H1 (cell line): ENCODE measurements at regions of chr10 and their contacts with region 1.

Region 1: GRCh38 chr10:47055386-47056246 is 144.4 kb downstream of the PTPN20 start:
- DNase-seq: no peak
- H3K4me3 ChIP-seq: no peak overlapping the region
- H3K27ac ChIP-seq: no peak overlapping the region; the same call in 1 of the 2 replicates
- H3K4me1 ChIP-seq: no peaks in the 10 kb centered on the region
- H3K27me3 ChIP-seq: no peaks in the 10 kb centered on the region
- CTCF ChIP-seq: no peak
- EP300 ChIP-seq: no peak
- POLR2A ChIP-seq: no peak
- RAD21 ChIP-seq: no peak

Region 2: DNA sequence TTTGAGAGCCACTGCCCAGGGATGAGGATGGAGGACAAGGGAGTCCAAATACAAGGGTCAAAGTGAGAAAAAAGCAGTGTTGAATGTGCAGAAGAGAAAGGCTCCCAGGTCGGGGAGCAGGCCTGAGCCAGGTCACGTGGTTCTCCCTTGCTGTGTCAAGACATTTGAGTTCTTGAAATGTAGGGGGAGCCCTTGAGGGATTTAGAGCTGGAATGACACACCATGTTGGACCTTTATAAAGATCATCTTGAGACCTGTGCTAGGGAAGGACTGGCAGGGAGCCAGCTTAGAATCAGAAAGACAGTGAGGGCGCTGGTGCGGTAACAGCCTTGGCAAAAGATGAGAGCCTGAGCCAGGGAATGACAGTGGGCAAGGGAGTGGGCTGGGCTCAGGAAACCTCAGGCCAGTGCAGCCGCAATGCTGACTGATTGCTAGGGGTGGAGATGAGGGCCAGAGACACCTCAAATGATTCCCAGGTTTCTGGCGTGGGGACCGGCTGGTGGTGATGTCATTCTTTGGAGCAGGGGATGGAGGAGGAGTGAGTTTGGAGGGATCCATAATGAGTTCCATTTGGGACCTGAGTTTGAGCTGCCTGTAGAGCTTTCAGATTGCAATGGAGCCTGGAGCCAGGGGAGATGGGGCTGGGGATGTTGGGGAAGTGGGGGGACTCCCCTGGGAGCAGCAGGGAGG is 24.3 kb before region 1 on chr10:
- CTCF ChIA-PET with region 1: interaction called, 11 read pairs
- POLR2A ChIA-PET with region 1: no interaction called
- DNase-seq: peak in 1 of 2 experiments; percentile 45
- H3K4me3 ChIP-seq: no peak overlapping the region
- H3K27ac ChIP-seq: no peak overlapping the region
- H3K4me1 ChIP-seq: no peaks in the 10 kb centered on the region
- H3K27me3 ChIP-seq: no peaks in the 10 kb centered on the region
- CTCF ChIP-seq: peak in 2 of 3 experiments; percentile 25 to 44; a peak in 3 of 4 replicates
- EP300 ChIP-seq: no peak
- POLR2A ChIP-seq: no peak
- RAD21 ChIP-seq: peak in 1 of 2 experiments; percentile 29; a peak in 2 of 4 replicates